Gastrocnemius medialis (tissue), 4 donors: ENCODE measurements at regions of chr11 and their contacts with region 1.

Region 1: DNA sequence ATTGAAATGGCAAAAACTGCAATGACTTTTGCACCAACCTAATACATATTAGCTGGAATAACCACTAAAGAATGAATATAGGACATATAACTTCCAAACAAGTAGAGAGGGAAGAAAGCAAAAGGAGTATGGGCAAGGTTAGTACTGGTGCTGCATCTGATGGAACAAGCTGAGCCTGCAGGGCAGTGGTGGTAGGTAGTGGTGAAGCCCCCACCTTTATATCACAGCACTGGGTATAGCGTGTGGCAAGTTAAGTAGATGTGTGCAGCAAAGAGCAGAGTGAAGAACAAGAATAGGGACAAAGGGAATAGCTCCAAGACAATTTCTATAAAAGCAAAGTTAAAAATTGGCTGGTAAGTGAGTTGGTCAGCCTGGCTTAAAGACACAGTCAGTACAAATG is 62.3 kb downstream of the CTNND1 start:
- DNase-seq: no peak
- ATAC-seq: no peak
- H3K4me3 ChIP-seq: no peak overlapping the region
- H3K27ac ChIP-seq: no peak overlapping the region
- H3K4me1 ChIP-seq: no peaks in the 10 kb centered on the region
- H3K27me3 ChIP-seq: no peaks in the 10 kb centered on the region
- CTCF ChIP-seq: no peak
- POLR2A ChIP-seq: no peak

Region 2: DNA sequence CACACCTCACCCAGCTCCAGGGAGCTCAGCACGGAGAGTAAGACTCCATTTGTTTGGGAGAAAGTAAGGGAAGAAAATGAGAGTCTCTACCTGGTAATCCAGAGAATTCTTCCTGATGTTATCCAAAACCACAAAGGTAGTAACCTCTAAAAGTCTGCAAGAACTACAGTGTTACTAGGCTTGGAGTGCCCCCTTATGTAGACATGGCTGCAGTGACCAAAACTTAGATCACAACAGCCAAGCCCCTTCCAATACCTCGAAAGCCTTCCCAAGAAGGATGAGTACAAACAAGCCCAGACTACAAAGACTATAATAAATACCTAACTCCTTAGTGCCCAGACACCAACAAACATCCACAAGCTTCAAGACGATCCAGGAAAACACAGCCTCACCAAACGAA is 261.3 kb before region 1 on chr11:
- in situ Hi-C with region 1: loop called in 1 of 4 experiments (anchors 25 kb)
- intact Hi-C with region 1: loop called (anchors 5 kb)
- DNase-seq: no peak
- ATAC-seq: no peak
- H3K4me3 ChIP-seq: no peak overlapping the region
- H3K27ac ChIP-seq: no peak overlapping the region
- H3K4me1 ChIP-seq: peaks cover 10 to 22% of the 10 kb centered on the region in 2 donors
- H3K27me3 ChIP-seq: no peaks in the 10 kb centered on the region
- CTCF ChIP-seq: no peak
- POLR2A ChIP-seq: no peak